ENCODE measurements at regions of chr1 and their contacts with region 1.

Region 1: GRCh38 chr1:26169669-26170471 is at the start of gene ZNF593:
- DNase-seq: peak; percentile 91
- H3K4me3 ChIP-seq: peak within 1 kb of the TSS; percentile 91
- H3K27ac ChIP-seq: peak within 1 kb of the TSS; percentile 94
- H3K4me1 ChIP-seq: peaks cover 17% of the 10 kb centered on the region
- H3K27me3 ChIP-seq: no peaks in the 10 kb centered on the region
- CTCF ChIP-seq: peak; percentile 96
- total RNA-seq, gene ZNF593: 61.9 and 62.3 TPM in 2 replicates

Region 2: DNA sequence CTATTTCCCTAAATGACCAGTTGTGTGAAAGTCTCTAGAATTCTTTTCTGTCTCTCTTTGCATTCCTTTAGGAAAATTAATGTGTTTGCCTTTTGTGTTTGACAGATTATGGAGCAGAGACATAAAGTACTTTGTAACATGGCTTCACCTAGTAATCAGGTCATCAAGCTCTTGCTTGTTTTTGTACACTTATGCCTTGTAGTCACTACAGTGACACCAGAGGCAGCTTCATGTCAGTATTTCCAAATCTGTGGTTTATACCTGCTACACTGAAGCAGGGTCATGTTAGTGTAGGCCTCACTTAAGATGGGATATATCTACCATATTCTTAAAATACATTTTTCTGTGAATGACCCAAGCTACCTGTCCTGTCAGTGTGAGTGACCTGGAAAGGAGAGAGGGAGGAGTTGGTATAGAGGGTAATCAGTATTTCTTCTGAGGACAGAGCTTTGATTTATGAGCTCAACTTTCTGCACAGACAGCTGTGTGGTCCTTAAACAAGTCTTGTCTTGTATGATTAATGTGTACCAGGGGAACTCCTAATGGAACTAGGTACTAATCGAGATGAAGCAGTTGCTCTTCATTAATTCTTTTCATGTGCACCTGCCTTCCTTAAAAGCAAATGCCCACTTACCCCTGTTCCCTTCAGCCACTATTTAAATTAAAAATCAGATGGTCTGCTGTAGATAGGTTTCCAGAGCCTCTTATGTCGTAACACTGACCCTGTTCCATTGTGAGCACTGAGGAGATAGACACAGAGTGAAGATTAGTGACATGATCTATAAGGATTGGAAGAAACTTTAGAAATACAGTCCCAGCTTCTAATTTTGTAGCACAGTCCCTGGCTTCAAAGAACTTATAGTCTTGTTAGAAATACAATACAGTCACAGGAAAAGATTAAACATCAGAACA is 693.4 kb before region 1 on chr1:
- CTCF ChIA-PET with region 1: no interaction called
- POLR2A ChIA-PET with region 1: no interaction called
- intact Hi-C with region 1: no loop called
- DNase-seq: no peak
- H3K4me3 ChIP-seq: no peak overlapping the region
- H3K27ac ChIP-seq: no peak overlapping the region
- H3K4me1 ChIP-seq: peaks cover 3% of the 10 kb centered on the region
- H3K27me3 ChIP-seq: no peaks in the 10 kb centered on the region
- CTCF ChIP-seq: no peak

Region 3: GRCh38 chr1:25958465-25958864 is 211.4 kb before region 1 on chr1:
- CTCF ChIA-PET with region 1: no interaction called
- POLR2A ChIA-PET with region 1: no interaction called
- intact Hi-C with region 1: no loop called
- DNase-seq: no peak
- H3K4me3 ChIP-seq: no peak overlapping the region
- H3K27ac ChIP-seq: no peak overlapping the region
- H3K4me1 ChIP-seq: no peaks in the 10 kb centered on the region
- H3K27me3 ChIP-seq: no peaks in the 10 kb centered on the region
- CTCF ChIP-seq: no peak

Region 4: GRCh38 chr1:26111530-26112406 is 58.1 kb before region 1 on chr1 and contains the start of gene PDIK1L:
- CTCF ChIA-PET with region 1: interaction called, 11 read pairs
- POLR2A ChIA-PET with region 1: no interaction called
- intact Hi-C with region 1: no loop called
- DNase-seq: peak; percentile 97
- H3K4me3 ChIP-seq: peak within 1 kb of the TSS; percentile 99
- H3K27ac ChIP-seq: peak within 1 kb of the TSS; percentile 97
- H3K4me1 ChIP-seq: peaks cover 9% of the 10 kb centered on the region
- H3K27me3 ChIP-seq: no peaks in the 10 kb centered on the region
- CTCF ChIP-seq: no peak
- total RNA-seq, gene PDIK1L: 12.9 and 13.4 TPM in 2 replicates

Region 5: GRCh38 chr1:26233903-26234643 is 64.2 kb after region 1 on chr1 and contains the start of gene CEP85:
- CTCF ChIA-PET with region 1: interaction called, 11 read pairs
- POLR2A ChIA-PET with region 1: no interaction called
- intact Hi-C with region 1: no loop called
- DNase-seq: peak; percentile 97
- H3K4me3 ChIP-seq: peak within 1 kb of the TSS; percentile 76
- H3K27ac ChIP-seq: peak within 1 kb of the TSS; percentile 79
- H3K4me1 ChIP-seq: peaks cover 28% of the 10 kb centered on the region
- H3K27me3 ChIP-seq: no peaks in the 10 kb centered on the region
- CTCF ChIP-seq: peak; percentile 92
- total RNA-seq, gene CEP85: 51.3 and 51.5 TPM in 2 replicates

Measured in A673 (cell line).